ENCODE measurements at regions of chr4 and their contacts with region 1.

Region 1: GRCh38 chr4:38319456-38320342 is 344.3 kb upstream of the KLF3 start:
- DNase-seq: peak; percentile 83 to 98 (median 90)
- ATAC-seq: peak; percentile 88
- H3K4me3 ChIP-seq: peak overlapping the region; percentile 43 to 51
- H3K4me3 Mint-ChIP-seq: peak overlapping the region; percentile 82
- H3K27ac ChIP-seq: peak overlapping the region; percentile 33 to 78
- H3K27ac Mint-ChIP-seq: peak overlapping the region; percentile 90
- H3K4me1 ChIP-seq: peaks cover 39% of the 10 kb centered on the region
- H3K4me1 Mint-ChIP-seq: peaks cover 62% of the 10 kb centered on the region
- H3K27me3 ChIP-seq: no peaks in the 10 kb centered on the region
- H3K27me3 Mint-ChIP-seq: no peaks in the 10 kb centered on the region
- CTCF ChIP-seq: peak; percentile 96

Region 2: GRCh38 chr4:38062088-38062893 is 257.4 kb before region 1 on chr4:
- CTCF ChIA-PET with region 1: no interaction called
- POLR2A ChIA-PET with region 1: no interaction called
- intact Hi-C with region 1: loop called (anchors 2 to 5 kb)
- DNase-seq: peak; percentile 24 to 80 (median 67)
- ATAC-seq: peak; percentile 59
- H3K4me3 ChIP-seq: peak overlapping the region in 1 of 2 experiments; percentile 13
- H3K4me3 Mint-ChIP-seq: peak overlapping the region; percentile 83
- H3K27ac ChIP-seq: no peak overlapping the region
- H3K27ac Mint-ChIP-seq: peak overlapping the region; percentile 11
- H3K4me1 ChIP-seq: no peaks in the 10 kb centered on the region
- H3K4me1 Mint-ChIP-seq: peaks cover 12% of the 10 kb centered on the region
- H3K27me3 ChIP-seq: no peaks in the 10 kb centered on the region
- H3K27me3 Mint-ChIP-seq: no peaks in the 10 kb centered on the region
- CTCF ChIP-seq: peak; percentile 97

Region 3: DNA sequence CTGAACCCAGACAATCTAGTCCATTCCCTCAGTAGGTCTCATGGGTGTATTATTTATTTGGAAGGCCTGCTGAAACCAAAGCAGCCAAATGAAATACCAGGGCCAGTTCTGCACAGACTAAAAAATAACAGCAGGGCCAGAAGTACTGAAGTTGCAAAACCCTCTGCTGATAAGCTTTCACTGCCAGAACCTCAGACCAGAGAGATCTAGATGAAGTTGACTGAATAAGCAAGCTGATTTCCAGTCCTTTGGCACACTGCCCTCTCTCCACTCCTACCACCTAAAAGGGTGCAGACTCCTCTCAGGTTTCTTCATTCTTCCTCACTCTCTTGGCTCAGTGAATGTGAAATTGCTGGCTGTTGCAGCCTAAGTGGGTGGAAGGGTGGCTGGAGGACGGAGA is 67.6 kb after region 1 on chr4:
- CTCF ChIA-PET with region 1: interaction called, 3 read pairs
- POLR2A ChIA-PET with region 1: no interaction called
- intact Hi-C with region 1: loop called in 1 of 2 experiments (anchors 10 kb)
- DNase-seq: no peak
- ATAC-seq: no peak
- H3K4me3 ChIP-seq: no peak overlapping the region
- H3K4me3 Mint-ChIP-seq: no peak overlapping the region
- H3K27ac ChIP-seq: no peak overlapping the region
- H3K27ac Mint-ChIP-seq: no peak overlapping the region
- H3K4me1 ChIP-seq: peaks cover 18% of the 10 kb centered on the region
- H3K4me1 Mint-ChIP-seq: peaks cover 22% of the 10 kb centered on the region
- H3K27me3 ChIP-seq: no peaks in the 10 kb centered on the region
- H3K27me3 Mint-ChIP-seq: no peaks in the 10 kb centered on the region
- CTCF ChIP-seq: no peak

Region 4: DNA sequence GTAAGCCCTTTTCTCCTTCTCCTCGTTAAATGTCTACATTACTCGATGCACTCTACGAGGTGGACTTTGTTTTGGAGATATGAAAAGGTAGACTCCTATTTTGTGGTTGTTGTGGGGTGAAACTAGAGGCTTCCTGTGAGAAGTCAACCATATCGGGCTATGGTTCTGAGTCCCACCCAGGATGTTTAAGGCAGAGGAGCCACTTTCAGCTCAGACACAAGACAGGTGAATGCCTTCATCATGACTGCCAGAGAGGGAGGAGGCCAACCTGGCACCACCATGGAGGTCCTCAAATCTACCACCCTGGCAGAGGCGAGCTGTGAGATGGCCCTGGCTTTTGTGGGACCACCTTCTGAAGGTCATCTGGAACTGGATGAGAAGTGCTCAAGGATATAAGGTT is 189.9 kb after region 1 on chr4:
- CTCF ChIA-PET with region 1: interaction called, 13 read pairs
- POLR2A ChIA-PET with region 1: no interaction called
- intact Hi-C with region 1: loop called (anchors 1 to 5 kb)
- DNase-seq: peak; percentile 16 to 86 (median 58)
- ATAC-seq: peak; percentile 93
- H3K4me3 ChIP-seq: peak overlapping the region; percentile 52 to 54
- H3K4me3 Mint-ChIP-seq: peak overlapping the region; percentile 88
- H3K27ac ChIP-seq: peak overlapping the region; percentile 40 to 73
- H3K27ac Mint-ChIP-seq: peak overlapping the region; percentile 90
- H3K4me1 ChIP-seq: peaks cover 72% of the 10 kb centered on the region
- H3K4me1 Mint-ChIP-seq: peaks cover 90% of the 10 kb centered on the region
- H3K27me3 ChIP-seq: no peaks in the 10 kb centered on the region
- H3K27me3 Mint-ChIP-seq: no peaks in the 10 kb centered on the region
- CTCF ChIP-seq: no peak

Region 5: GRCh38 chr4:38654273-38654672 is 334.6 kb after region 1 on chr4:
- CTCF ChIA-PET with region 1: interaction called, 12 read pairs
- POLR2A ChIA-PET with region 1: interaction called, 11 read pairs
- intact Hi-C with region 1: no loop called
- DNase-seq: peak in 7 of 9 experiments; percentile 38 to 94 (median 71)
- ATAC-seq: peak; percentile 72
- H3K4me3 ChIP-seq: peak overlapping the region; percentile 37 to 40
- H3K4me3 Mint-ChIP-seq: peak overlapping the region; percentile 72
- H3K27ac ChIP-seq: peak overlapping the region; percentile 92 to 98
- H3K27ac Mint-ChIP-seq: peak overlapping the region; percentile 99
- H3K4me1 ChIP-seq: peaks cover 57% of the 10 kb centered on the region
- H3K4me1 Mint-ChIP-seq: peaks cover 59% of the 10 kb centered on the region
- H3K27me3 ChIP-seq: no peaks in the 10 kb centered on the region
- H3K27me3 Mint-ChIP-seq: no peaks in the 10 kb centered on the region
- CTCF ChIP-seq: no peak

Region 6: GRCh38 chr4:38730830-38731646 is 411.3 kb after region 1 on chr4:
- CTCF ChIA-PET with region 1: interaction called, 12 read pairs
- POLR2A ChIA-PET with region 1: interaction called, 3 read pairs
- intact Hi-C with region 1: loop called (anchors 1 kb)
- DNase-seq: peak; percentile 60 to 90 (median 81)
- ATAC-seq: peak; percentile 75
- H3K4me3 ChIP-seq: no peak overlapping the region
- H3K4me3 Mint-ChIP-seq: no peak overlapping the region
- H3K27ac ChIP-seq: no peak overlapping the region
- H3K27ac Mint-ChIP-seq: no peak overlapping the region
- H3K4me1 ChIP-seq: peaks cover 7% of the 10 kb centered on the region
- H3K4me1 Mint-ChIP-seq: peaks cover 11% of the 10 kb centered on the region
- H3K27me3 ChIP-seq: no peaks in the 10 kb centered on the region
- H3K27me3 Mint-ChIP-seq: no peaks in the 10 kb centered on the region
- CTCF ChIP-seq: peak; percentile 91

Region 7: DNA sequence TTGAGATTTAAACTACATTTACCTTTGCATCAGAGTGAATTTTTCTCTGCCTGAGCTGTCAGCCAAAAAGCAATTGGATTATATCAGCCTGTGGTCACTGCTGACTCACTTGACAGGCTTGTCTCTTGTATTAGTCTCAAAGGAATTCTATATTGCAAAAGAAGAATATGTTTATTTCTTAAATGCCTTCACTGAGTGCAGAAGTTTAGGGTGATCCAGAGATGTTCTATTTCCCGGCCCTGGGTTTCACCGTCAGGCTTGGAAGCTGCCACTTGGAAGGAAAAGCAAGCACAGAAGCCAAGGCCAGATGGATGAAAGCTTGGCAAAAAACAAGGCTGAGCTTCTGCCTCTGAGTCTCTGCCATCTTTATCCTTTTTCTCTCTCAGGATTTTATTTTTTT is 628.9 kb after region 1 on chr4:
- CTCF ChIA-PET with region 1: no interaction called
- POLR2A ChIA-PET with region 1: no interaction called
- intact Hi-C with region 1: no loop called
- DNase-seq: no peak
- ATAC-seq: no peak
- H3K4me3 ChIP-seq: no peak overlapping the region
- H3K4me3 Mint-ChIP-seq: no peak overlapping the region
- H3K27ac ChIP-seq: peak overlapping the region in 1 of 2 experiments; percentile 3
- H3K27ac Mint-ChIP-seq: no peak overlapping the region
- H3K4me1 ChIP-seq: peaks cover 13% of the 10 kb centered on the region
- H3K4me1 Mint-ChIP-seq: peaks cover 16% of the 10 kb centered on the region
- H3K27me3 ChIP-seq: no peaks in the 10 kb centered on the region
- H3K27me3 Mint-ChIP-seq: peaks cover under 1% of the 10 kb centered on the region
- CTCF ChIP-seq: no peak

Region 8: GRCh38 chr4:39045827-39046221 is 726.1 kb after region 1 on chr4:
- CTCF ChIA-PET with region 1: no interaction called
- POLR2A ChIA-PET with region 1: no interaction called
- intact Hi-C with region 1: no loop called
- DNase-seq: peak in 4 of 9 experiments; percentile 15 to 65 (median 40)
- ATAC-seq: no peak
- H3K4me3 ChIP-seq: peak overlapping the region; percentile 34 to 55
- H3K4me3 Mint-ChIP-seq: peak overlapping the region; percentile 93
- H3K27ac ChIP-seq: peak overlapping the region in 1 of 2 experiments; percentile 47
- H3K27ac Mint-ChIP-seq: peak overlapping the region; percentile 95
- H3K4me1 ChIP-seq: peaks cover 21% of the 10 kb centered on the region
- H3K4me1 Mint-ChIP-seq: peaks cover 55% of the 10 kb centered on the region
- H3K27me3 ChIP-seq: no peaks in the 10 kb centered on the region
- H3K27me3 Mint-ChIP-seq: no peaks in the 10 kb centered on the region
- CTCF ChIP-seq: no peak